ENCODE measurements at regions of chr11 and their contacts with region 1.

Region 1: DNA sequence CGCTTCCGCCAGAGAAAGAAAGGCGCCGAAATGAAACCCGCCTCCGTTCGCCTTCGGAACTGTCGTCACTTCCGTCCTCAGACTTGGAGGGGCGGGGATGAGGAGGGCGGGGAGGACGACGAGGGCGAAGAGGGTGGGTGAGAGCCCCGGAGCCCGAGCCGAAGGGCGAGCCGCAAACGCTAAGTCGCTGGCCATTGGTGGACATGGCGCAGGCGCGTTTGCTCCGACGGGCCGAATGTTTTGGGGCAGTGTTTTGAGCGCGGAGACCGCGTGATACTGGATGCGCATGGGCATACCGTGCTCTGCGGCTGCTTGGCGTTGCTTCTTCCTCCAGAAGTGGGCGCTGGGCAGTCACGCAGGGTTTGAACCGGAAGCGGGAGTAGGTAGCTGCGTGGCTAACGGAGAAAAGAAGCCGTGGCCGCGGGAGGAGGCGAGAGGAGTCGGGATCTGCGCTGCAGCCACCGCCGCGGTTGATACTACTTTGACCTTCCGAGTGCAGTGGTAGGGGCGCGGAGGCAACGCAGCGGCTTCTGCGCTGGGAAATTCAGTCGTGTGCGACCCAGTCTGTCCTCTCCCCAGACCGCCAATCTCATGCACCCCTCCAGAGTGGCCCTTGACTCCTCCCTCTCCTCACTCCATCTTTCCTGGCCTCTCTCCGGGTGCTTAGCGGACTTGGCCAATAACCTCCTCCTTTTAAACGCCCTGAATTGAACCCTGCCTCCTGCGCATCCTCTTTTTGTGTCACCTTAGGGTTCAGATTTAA is at the start of gene ATM:
- H3K4me3 ChIP-seq: peak within 1 kb of the TSS; percentile 82
- H3K27ac ChIP-seq: peak within 1 kb of the TSS; percentile 80
- H3K4me1 ChIP-seq: no peaks in the 10 kb centered on the region
- CTCF ChIP-seq: peak; percentile 95

Region 2: DNA sequence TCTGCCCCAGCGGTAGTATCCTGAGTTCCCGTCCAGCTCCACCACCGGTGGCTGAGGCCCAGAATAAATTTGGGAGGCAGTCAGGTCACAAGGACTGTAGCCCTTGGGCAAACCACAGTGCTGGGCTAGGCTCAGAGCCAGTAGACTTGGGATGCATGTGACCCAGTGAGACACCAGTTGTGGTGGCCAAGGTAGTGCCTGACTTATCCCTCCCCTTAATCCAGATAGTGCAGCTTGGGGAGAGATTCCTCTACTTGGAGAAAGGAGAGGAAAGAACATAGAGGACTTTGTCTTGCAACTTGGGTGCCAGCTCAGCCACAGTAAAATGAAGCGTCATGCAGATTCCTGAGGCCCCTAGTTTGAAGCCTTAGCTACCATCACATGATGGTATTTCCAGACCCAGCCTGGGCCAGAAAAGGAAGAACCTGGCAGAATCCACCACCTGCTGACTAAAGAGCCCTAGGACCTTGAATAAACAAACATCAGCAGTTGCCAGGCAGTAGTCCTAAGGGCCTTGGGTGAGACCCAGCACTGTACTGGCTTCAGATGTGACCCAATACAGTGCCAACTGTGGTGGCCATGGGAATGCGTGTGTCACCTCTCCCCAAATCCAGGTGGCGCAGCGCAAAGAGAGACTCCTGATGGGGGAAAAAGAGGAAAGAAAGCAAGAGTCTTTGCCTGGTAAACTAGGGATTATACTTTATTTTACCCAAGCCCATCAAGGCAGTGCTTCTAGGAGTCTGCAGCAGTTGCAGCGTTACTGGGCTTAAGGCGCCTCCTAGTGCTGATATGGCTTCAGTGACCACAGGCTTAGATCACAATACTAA is 425.0 kb after region 1 on chr11:
- CTCF ChIA-PET with region 1: interaction called, 15 read pairs
- POLR2A ChIA-PET with region 1: no interaction called
- H3K4me3 ChIP-seq: no peak overlapping the region
- H3K27ac ChIP-seq: no peak overlapping the region
- H3K4me1 ChIP-seq: no peaks in the 10 kb centered on the region
- CTCF ChIP-seq: peak; percentile 52

Measured in HEK293 (cell line).